Activated CD4-positive, alpha-beta T cell treated with anti-CD3 and anti-CD28 coated beads for 36 hours (primary cell): ENCODE measurements at regions of chr10 and their contacts with region 1.

Region 1: DNA sequence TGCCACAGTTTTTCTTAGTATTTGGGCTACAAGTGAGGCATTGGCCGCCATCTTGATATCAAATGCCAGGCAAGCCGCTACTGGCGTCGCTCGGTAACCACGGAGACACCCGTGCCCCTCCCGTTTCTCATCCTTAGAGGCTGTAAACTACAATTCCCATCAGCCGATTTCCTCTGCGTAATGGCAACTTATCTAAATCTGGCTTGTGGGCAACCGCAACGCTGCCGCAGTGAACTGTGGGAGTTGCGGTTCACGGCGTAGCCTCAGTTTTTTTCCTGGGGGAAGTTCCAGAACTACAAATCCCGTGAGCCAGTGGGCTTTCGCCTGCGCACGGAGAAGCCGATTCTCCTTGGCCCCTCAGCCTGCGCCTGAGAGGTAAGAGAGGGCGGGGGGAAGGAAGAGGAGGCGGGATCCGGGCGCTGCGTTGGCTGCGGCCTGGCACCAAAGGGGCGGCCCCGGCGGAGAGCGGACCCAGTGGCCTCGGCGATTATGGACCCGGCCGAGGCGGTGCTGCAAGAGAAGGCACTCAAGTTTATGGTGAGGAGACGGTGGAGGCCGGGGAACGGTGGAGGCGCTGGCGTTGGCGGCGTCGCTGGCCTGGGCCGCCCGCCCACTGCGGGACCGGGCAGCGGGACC is at the start of gene BTRC:
- DNase-seq: peak; percentile 97
- ATAC-seq: peak; percentile 98
- H3K4me3 Mint-ChIP-seq: peak within 1 kb of the TSS; percentile 91
- H3K27ac Mint-ChIP-seq: peak within 1 kb of the TSS; percentile 94
- H3K4me1 Mint-ChIP-seq: peaks cover 27% of the 10 kb centered on the region
- H3K27me3 Mint-ChIP-seq: peaks cover 12% of the 10 kb centered on the region
- total RNA-seq, gene BTRC: 15.5 to 18.7 TPM

Region 2: GRCh38 chr10:100986952-100987750 is 366.7 kb before region 1 on chr10 and contains the starts of genes MRPL43 and TWNK:
- CTCF ChIA-PET with region 1: no interaction called
- POLR2A ChIA-PET with region 1: no interaction called
- intact Hi-C with region 1: loop called in 1 of 2 experiments (anchors 1 kb)
- DNase-seq: peak; percentile 93
- ATAC-seq: peak; percentile 98
- H3K4me3 Mint-ChIP-seq: peak within 1 kb of the TSS; percentile 100
- H3K27ac Mint-ChIP-seq: peak within 1 kb of the TSS; percentile 94
- H3K4me1 Mint-ChIP-seq: peaks cover 43% of the 10 kb centered on the region
- H3K27me3 Mint-ChIP-seq: no peaks in the 10 kb centered on the region
- total RNA-seq, gene MRPL43: 53.4 to 62.6 TPM
- total RNA-seq, gene TWNK: 13.8 to 17.9 TPM

Region 3: DNA sequence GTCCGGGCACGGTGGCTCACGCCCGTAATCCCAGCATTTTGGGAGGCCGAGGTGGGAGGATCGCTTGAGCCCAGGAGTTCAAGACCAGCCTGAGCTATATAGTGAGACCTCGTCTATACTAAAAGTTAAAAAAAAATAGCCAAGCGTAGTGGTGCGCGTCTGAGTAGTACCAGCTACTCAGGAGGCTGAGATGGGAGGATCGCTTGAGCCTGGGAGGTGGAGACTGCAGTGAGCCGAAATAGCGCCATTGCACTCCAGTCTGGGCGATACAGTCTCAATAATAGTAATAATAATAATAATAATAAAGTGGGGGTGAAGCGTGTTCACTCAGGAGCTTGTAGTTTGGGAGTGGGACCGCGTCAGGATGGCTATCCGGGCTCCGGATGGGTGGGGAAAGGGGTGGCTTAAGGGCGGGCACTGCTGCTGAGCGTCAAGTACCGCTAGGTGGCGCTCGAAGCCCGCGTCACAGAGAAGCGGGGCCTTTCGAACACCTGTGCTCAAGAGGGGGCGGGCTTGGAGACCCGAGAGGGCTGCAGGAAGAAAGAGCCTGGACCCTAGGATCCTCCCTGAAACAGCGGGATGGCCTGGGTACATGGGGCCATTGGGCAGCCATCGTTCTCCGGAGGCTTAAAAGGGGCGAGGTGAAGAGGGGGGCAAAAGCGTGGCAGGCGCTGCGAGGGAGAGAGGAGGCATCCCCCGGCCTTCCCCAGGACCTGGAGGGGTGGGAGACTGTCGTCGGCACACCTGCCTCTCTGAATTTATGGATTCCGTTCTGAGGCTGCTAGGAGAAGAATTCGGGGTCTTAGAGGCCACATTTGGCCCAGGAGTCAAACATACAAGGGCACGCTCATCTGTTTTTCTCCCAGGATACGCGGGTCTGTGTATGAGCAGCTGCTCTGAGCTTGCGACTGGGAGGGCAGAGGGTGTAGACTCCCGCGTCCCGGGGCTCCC is 139.1 kb before region 1 on chr10:
- CTCF ChIA-PET with region 1: interaction called, 3 read pairs
- POLR2A ChIA-PET with region 1: no interaction called
- intact Hi-C with region 1: loop called in 1 of 2 experiments (anchors 1 kb)
- DNase-seq: peak; percentile 89
- ATAC-seq: peak; percentile 84
- H3K4me3 Mint-ChIP-seq: peak overlapping the region; percentile 68
- H3K27ac Mint-ChIP-seq: no peak overlapping the region
- H3K4me1 Mint-ChIP-seq: peaks cover 28% of the 10 kb centered on the region
- H3K27me3 Mint-ChIP-seq: peaks cover 69% of the 10 kb centered on the region

Region 4: GRCh38 chr10:101397140-101397539 is 43.3 kb after region 1 on chr10:
- CTCF ChIA-PET with region 1: interaction called, 3 read pairs
- POLR2A ChIA-PET with region 1: no interaction called
- intact Hi-C with region 1: loop called in 1 of 2 experiments (anchors 1 kb)
- DNase-seq: peak; percentile 30
- ATAC-seq: peak; percentile 69
- H3K4me3 Mint-ChIP-seq: no peak overlapping the region
- H3K27ac Mint-ChIP-seq: no peak overlapping the region
- H3K4me1 Mint-ChIP-seq: peaks cover 21% of the 10 kb centered on the region
- H3K27me3 Mint-ChIP-seq: no peaks in the 10 kb centered on the region

Region 5: DNA sequence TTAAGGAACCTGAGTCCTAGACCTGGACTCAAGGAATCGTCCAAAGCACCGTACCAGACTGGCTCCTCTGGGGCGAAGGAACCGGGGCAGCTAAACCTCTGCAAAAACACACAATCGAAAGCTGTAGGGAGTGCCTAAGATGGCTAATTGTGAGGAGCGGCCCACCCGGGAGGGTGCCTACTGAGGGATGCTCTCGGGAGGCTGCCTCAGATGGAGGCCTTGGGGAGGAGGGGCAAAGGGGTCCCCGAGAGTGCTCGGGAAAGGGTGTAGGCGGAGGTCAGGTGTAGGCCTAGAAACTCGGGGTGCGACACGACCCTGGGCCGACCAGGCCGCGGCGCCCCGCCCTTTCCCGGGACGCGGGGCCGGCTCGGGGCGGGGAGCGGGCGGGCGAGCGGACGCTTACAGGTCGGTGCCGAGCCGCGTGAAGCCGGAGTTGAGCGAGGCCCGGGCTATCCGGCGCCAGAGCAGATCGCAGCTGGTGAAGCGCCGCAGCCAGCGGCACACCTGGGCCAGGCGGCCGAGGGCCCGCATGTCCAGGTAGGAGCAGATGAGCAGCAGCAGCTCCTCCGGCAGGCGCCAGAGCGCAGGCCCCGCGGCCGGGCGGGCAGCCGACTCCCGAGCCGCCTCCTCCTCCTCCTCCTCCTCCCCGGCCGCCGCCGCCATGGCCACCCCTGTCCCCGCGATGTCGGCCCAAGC is 340.3 kb after region 1 on chr10:
- CTCF ChIA-PET with region 1: no interaction called
- POLR2A ChIA-PET with region 1: no interaction called
- intact Hi-C with region 1: loop called in 1 of 2 experiments (anchors 1 kb)
- DNase-seq: peak; percentile 80
- ATAC-seq: peak; percentile 76
- H3K4me3 Mint-ChIP-seq: peak overlapping the region; percentile 88
- H3K27ac Mint-ChIP-seq: peak overlapping the region; percentile 97
- H3K4me1 Mint-ChIP-seq: peaks cover 43% of the 10 kb centered on the region
- H3K27me3 Mint-ChIP-seq: no peaks in the 10 kb centered on the region

Region 6: DNA sequence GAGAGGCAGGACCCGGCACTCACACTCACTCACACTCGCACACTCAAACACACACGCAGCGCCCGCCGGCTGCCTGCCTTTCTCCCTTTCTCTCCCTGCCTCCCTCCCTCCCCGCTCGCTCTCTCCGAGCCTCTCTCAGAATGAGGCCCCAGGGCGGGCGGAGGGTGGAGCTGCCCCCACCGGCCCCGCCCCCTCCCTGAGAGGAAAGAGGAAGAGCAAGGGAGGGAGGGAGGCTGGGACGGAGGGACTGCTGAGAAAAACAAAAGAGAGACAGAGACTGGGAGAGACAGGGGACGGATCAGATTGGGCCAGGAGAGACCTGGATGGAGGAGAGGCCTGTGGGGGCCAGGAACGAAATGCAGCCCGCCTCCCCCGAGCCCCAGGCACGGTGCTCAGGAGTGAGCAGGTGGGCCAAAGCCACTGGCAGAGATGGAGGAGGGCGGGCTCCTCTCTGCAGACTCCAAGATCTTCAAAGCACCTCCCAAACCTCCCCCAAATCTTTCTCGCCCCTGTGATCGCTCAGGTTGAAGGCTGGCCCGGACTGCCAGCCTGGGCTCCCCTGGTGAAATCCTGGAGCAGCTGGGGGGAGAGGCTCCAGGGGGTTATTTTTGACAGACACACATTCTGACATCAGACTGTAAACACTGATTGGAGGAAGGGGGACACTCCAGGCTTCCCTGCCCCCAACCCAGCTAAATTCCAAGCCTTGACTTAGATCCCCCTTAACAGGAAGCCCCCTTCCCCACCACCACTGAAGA is 761.2 kb after region 1 on chr10:
- CTCF ChIA-PET with region 1: no interaction called
- POLR2A ChIA-PET with region 1: no interaction called
- intact Hi-C with region 1: loop called in 1 of 2 experiments (anchors 5 kb)
- DNase-seq: peak; percentile 95
- ATAC-seq: peak; percentile 60
- H3K4me3 Mint-ChIP-seq: peak overlapping the region; percentile 81
- H3K27ac Mint-ChIP-seq: peak overlapping the region; percentile 97
- H3K4me1 Mint-ChIP-seq: peaks cover 55% of the 10 kb centered on the region
- H3K27me3 Mint-ChIP-seq: no peaks in the 10 kb centered on the region